ENCODE measurements at regions of chr6 and their contacts with region 1.

Region 1: DNA sequence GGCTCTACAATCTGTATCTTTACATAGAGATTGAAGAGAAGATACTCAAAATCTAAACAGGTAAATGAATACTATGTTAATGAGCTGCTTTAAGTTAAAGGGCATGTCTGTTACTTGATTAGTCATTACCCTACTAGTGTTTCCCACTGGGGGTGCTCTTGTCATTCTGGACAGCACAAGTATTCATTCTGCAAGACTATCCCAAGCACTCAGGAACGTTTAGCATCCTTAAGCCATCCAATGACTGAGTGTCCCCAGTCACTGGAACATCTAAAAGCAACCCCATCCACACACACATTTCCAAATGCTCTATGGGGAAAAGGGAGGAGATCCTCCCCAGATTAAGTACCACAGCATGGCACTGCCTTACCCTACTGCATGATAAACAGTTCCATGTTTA is 25.7 kb downstream of the EZR start:
- DNase-seq: peak; percentile 50
- ATAC-seq: peak; percentile 65
- H3K4me3 Mint-ChIP-seq: no peak overlapping the region
- H3K27ac Mint-ChIP-seq: peak overlapping the region; percentile 70
- H3K4me1 Mint-ChIP-seq: peaks cover 88% of the 10 kb centered on the region
- H3K27me3 Mint-ChIP-seq: no peaks in the 10 kb centered on the region
- CTCF ChIP-seq: peak; percentile 58

Region 2: GRCh38 chr6:158754738-158755137 is 38.7 kb before region 1 on chr6:
- CTCF ChIA-PET with region 1: no interaction called
- POLR2A ChIA-PET with region 1: no interaction called
- intact Hi-C with region 1: no loop called
- DNase-seq: no peak
- ATAC-seq: no peak
- H3K4me3 Mint-ChIP-seq: no peak overlapping the region
- H3K27ac Mint-ChIP-seq: no peak overlapping the region
- H3K4me1 Mint-ChIP-seq: no peaks in the 10 kb centered on the region
- H3K27me3 Mint-ChIP-seq: no peaks in the 10 kb centered on the region
- CTCF ChIP-seq: no peak

Region 3: GRCh38 chr6:158769771-158770432 is 23.5 kb before region 1 on chr6:
- CTCF ChIA-PET with region 1: interaction called, 5 read pairs
- POLR2A ChIA-PET with region 1: interaction called, 10 read pairs
- intact Hi-C with region 1: no loop called
- DNase-seq: no peak
- ATAC-seq: no peak
- H3K4me3 Mint-ChIP-seq: peak overlapping the region; percentile 20
- H3K27ac Mint-ChIP-seq: peak overlapping the region; percentile 81
- H3K4me1 Mint-ChIP-seq: peaks cover 48% of the 10 kb centered on the region
- H3K27me3 Mint-ChIP-seq: no peaks in the 10 kb centered on the region
- CTCF ChIP-seq: no peak